CD14-positive monocyte (primary cell): ENCODE measurements at regions of chr19 and their contacts with region 1.

Region 1: GRCh38 chr19:11035441-11036377 is 53.6 kb upstream of the LDLR start:
- DNase-seq: peak; percentile 73 to 86 (median 82)
- H3K4me3 ChIP-seq: no peak overlapping the region
- H3K4me3 Mint-ChIP-seq: no peak overlapping the region
- H3K27ac ChIP-seq: no peak overlapping the region
- H3K27ac Mint-ChIP-seq: peak overlapping the region in 5 of 7 donors; percentile 15 to 74 (median 27)
- H3K4me1 ChIP-seq: peaks cover 3 to 6% of the 10 kb centered on the region in 2 donors
- H3K4me1 Mint-ChIP-seq: peaks cover 6% of the 10 kb centered on the region
- H3K27me3 ChIP-seq: no peaks in the 10 kb centered on the region
- H3K27me3 Mint-ChIP-seq: no peaks in the 10 kb centered on the region
- CTCF ChIP-seq: peak; percentile 94

Region 2: GRCh38 chr19:11069561-11069960 is 33.9 kb after region 1 on chr19:
- intact Hi-C with region 1: loop called in 1 of 2 experiments (anchors 5 kb)
- DNase-seq: peak in 2 of 3 donors; percentile 43 to 44
- H3K4me3 ChIP-seq: no peak overlapping the region
- H3K4me3 Mint-ChIP-seq: peak overlapping the region in 1 of 2 donors; percentile 8
- H3K27ac ChIP-seq: no peak overlapping the region
- H3K27ac Mint-ChIP-seq: peak overlapping the region in 3 of 7 donors; percentile 63 to 75 (median 70)
- H3K4me1 ChIP-seq: peaks cover 39 to 43% of the 10 kb centered on the region in 2 donors
- H3K4me1 Mint-ChIP-seq: peaks cover 46% of the 10 kb centered on the region
- H3K27me3 ChIP-seq: no peaks in the 10 kb centered on the region
- H3K27me3 Mint-ChIP-seq: peaks cover 1 to 10% (median 10%) of the 10 kb centered on the region in 3 donors
- CTCF ChIP-seq: no peak

Region 3: DNA sequence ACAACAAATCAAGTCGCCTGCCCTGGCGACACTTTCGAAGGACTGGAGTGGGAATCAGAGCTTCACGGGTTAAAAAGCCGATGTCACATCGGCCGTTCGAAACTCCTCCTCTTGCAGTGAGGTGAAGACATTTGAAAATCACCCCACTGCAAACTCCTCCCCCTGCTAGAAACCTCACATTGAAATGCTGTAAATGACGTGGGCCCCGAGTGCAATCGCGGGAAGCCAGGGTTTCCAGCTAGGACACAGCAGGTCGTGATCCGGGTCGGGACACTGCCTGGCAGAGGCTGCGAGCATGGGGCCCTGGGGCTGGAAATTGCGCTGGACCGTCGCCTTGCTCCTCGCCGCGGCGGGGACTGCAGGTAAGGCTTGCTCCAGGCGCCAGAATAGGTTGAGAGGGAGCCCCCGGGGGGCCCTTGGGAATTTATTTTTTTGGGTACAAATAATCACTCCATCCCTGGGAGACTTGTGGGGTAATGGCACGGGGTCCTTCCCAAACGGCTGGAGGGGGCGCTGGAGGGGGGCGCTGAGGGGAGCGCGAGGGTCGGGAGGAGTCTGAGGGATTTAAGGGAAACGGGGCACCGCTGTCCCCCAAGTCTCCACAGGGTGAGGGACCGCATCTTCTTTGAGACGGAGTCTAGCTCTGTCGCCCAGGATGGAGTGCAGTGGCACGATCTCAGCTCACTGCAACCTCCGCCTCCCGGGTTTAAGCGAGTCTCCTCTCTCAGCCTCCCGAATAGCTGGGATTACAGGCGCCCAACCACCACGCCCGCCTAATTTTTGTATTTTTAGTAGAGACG is 53.7 kb after region 1 on chr19 and contains the start of gene LDLR:
- intact Hi-C with region 1: loop called in 1 of 2 experiments (anchors 10 kb)
- DNase-seq: peak; percentile 84 to 95 (median 90)
- H3K4me3 ChIP-seq: peak within 1 kb of the TSS; percentile 58 to 81 (median 78)
- H3K4me3 Mint-ChIP-seq: peak within 1 kb of the TSS; percentile 86 to 89
- H3K27ac ChIP-seq: peak within 1 kb of the TSS; percentile 84 to 97
- H3K27ac Mint-ChIP-seq: peak within 1 kb of the TSS; percentile 88 to 100 (median 100)
- H3K4me1 ChIP-seq: peaks cover 58% of the 10 kb centered on the region in 2 donors
- H3K4me1 Mint-ChIP-seq: peaks cover 44% of the 10 kb centered on the region
- H3K27me3 ChIP-seq: peaks cover 0 to 10% of the 10 kb centered on the region in 2 donors
- H3K27me3 Mint-ChIP-seq: peaks cover 1 to 8% (median 7%) of the 10 kb centered on the region in 3 donors
- CTCF ChIP-seq: no peak
- polyA plus RNA-seq, gene LDLR: 14.3 to 21.2 (median 19.8) TPM

Region 4: GRCh38 chr19:11125994-11126685 is 90.4 kb after region 1 on chr19:
- intact Hi-C with region 1: loop called (anchors 2 to 5 kb)
- DNase-seq: peak; percentile 54 to 70 (median 63)
- H3K4me3 ChIP-seq: no peak overlapping the region
- H3K4me3 Mint-ChIP-seq: no peak overlapping the region
- H3K27ac ChIP-seq: no peak overlapping the region
- H3K27ac Mint-ChIP-seq: no peak overlapping the region
- H3K4me1 ChIP-seq: no peaks in the 10 kb centered on the region
- H3K4me1 Mint-ChIP-seq: peaks cover 3% of the 10 kb centered on the region
- H3K27me3 ChIP-seq: no peaks in the 10 kb centered on the region
- H3K27me3 Mint-ChIP-seq: peaks cover 0 to 2% (median 0%) of the 10 kb centered on the region in 3 donors
- CTCF ChIP-seq: peak; percentile 87

Region 5: DNA sequence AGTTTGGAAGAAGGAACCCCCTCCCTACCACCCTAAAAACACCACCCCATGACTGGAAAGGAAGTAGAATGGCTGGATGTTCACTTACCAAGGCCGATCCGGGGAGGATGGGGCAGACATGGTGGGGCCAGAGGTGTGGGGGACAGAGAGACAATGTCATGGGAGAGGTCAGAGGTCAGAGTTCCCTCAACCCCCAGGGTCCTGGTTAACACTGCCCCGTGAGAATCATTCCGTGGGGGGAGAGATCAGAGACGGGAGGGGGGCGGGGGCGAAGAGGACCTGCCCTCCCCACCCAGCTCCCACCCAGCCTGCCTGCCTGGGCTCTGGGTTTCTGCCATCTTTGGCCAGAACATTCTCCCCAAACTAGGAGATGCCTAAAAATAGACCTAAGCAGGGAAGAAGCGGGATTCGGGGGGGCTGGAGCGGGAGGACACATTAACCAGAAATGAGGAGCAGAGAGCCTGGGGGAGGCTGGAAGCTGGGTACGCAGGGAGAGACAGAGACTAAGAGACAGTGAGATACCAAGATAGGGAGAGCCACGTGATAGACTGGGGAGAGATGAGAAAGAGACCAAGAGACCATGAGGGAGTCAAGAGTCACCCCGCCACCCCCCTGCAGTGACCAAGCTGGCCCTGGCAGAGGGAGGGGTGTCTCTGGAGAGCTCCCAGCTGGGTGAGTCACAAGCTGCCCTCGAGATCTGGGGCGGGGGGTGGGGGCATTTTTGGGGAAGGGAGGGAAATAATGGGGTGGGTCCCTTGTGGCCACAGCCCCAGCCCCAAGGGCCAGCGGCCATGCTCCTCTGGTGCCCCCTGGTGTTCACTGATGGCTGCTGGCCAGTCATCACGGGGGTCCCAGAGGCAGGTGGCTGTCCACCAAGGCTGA is 167.7 kb after region 1 on chr19:
- intact Hi-C with region 1: loop called in 1 of 2 experiments (anchors 5 kb)
- DNase-seq: peak; percentile 69 to 86 (median 72)
- H3K4me3 ChIP-seq: no peak overlapping the region
- H3K4me3 Mint-ChIP-seq: peak overlapping the region in 1 of 2 donors; percentile 28
- H3K27ac ChIP-seq: no peak overlapping the region
- H3K27ac Mint-ChIP-seq: peak overlapping the region in 3 of 7 donors; percentile 63 to 64 (median 64)
- H3K4me1 ChIP-seq: peaks cover 0 to 11% of the 10 kb centered on the region in 2 donors
- H3K4me1 Mint-ChIP-seq: peaks cover 11% of the 10 kb centered on the region
- H3K27me3 ChIP-seq: no peaks in the 10 kb centered on the region
- H3K27me3 Mint-ChIP-seq: peaks cover 4 to 8% (median 7%) of the 10 kb centered on the region in 3 donors
- CTCF ChIP-seq: peak; percentile 91